ENCODE measurements at regions of chr7 and their contacts with region 1.

Region 1: DNA sequence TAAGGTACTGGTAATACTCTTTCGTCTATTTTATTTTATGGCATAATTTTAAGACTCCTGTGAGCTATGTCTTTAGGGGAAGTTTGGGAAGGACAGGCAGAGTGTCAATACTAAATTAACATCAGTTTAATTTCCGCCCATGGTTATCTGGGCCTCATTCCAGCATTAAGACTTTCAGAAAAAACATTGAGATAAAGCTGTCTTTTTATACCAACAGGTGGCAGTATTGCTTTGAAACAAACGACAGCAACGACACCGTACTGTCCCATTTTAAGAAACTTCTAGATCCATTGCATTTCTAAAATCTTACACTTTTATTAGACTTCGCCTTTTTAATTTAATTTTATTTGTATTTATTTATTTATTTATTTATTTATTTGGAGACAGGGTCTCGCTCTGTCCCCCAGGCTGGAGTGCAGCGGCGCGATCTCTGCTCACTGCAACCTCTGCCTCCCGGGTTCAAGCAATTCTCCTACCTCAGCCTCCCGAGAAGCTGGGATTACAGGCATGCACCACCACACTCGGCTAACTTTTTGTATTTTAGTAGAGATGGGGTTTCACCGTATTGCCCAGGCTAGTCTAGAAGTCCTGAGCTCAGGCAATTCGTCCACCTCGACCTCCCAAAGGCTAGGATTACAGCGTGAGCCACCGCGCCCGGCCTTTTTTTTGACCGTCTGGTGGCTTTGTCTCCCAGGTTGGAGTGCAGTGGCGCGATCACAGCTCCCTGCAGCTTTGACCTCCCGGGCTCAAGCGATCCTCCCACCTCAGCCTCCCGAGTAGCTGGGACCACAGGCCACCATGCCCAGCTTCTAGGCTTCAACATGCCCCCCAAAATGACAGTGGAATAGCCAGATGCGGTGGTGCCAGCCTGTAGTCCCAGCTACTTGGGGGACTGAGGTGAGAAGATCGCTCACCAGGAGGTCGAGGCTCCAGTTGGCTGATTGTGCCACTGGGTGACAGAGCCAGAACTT is 78.7 kb upstream of the C1GALT1 start:
- DNase-seq: no peak
- H3K4me3 Mint-ChIP-seq: no peak overlapping the region
- H3K27ac Mint-ChIP-seq: no peak overlapping the region
- H3K4me1 Mint-ChIP-seq: peaks cover 18% of the 10 kb centered on the region
- H3K27me3 Mint-ChIP-seq: no peaks in the 10 kb centered on the region

Region 2: GRCh38 chr7:7014827-7015610 is 88.6 kb before region 1 on chr7:
- CTCF ChIA-PET with region 1: no interaction called
- POLR2A ChIA-PET with region 1: no interaction called
- intact Hi-C with region 1: no loop called
- DNase-seq: no peak
- H3K4me3 Mint-ChIP-seq: no peak overlapping the region
- H3K27ac Mint-ChIP-seq: no peak overlapping the region
- H3K4me1 Mint-ChIP-seq: no peaks in the 10 kb centered on the region
- H3K27me3 Mint-ChIP-seq: peaks cover 24% of the 10 kb centered on the region

Region 3: DNA sequence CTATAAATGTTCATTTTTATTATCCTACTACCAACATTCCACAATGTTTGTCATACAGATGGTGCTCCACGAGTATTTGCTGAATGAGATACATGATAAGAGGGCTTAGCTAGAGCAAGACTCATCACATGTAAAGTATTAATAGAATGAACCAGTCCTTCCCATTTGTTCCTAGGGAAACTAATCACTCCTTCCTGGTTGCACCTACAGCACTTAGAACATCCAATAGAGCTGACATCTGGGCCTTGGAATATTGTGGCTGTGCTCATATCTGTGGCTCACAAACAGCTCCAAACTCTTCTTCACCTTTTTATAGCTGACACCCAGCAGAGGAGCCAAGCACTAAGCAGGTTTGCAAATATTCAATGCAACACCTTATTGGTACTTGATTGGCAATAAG is 13.2 kb before region 1 on chr7:
- CTCF ChIA-PET with region 1: interaction called, 16 read pairs
- POLR2A ChIA-PET with region 1: no interaction called
- intact Hi-C with region 1: no loop called
- DNase-seq: no peak
- H3K4me3 Mint-ChIP-seq: no peak overlapping the region
- H3K27ac Mint-ChIP-seq: no peak overlapping the region
- H3K4me1 Mint-ChIP-seq: no peaks in the 10 kb centered on the region
- H3K27me3 Mint-ChIP-seq: peaks cover 18% of the 10 kb centered on the region

Region 4: GRCh38 chr7:7190142-7190541 is 86.5 kb after region 1 on chr7:
- CTCF ChIA-PET with region 1: no interaction called
- POLR2A ChIA-PET with region 1: no interaction called
- intact Hi-C with region 1: no loop called
- DNase-seq: no peak
- H3K4me3 Mint-ChIP-seq: no peak overlapping the region
- H3K27ac Mint-ChIP-seq: no peak overlapping the region
- H3K4me1 Mint-ChIP-seq: peaks cover 48% of the 10 kb centered on the region
- H3K27me3 Mint-ChIP-seq: no peaks in the 10 kb centered on the region

Region 5: GRCh38 chr7:7416031-7416858 is 312.6 kb after region 1 on chr7:
- CTCF ChIA-PET with region 1: interaction called, 8 read pairs
- POLR2A ChIA-PET with region 1: no interaction called
- intact Hi-C with region 1: loop called (anchors 5 kb)
- DNase-seq: peak; percentile 38
- H3K4me3 Mint-ChIP-seq: no peak overlapping the region
- H3K27ac Mint-ChIP-seq: peak overlapping the region; percentile 79
- H3K4me1 Mint-ChIP-seq: peaks cover 7% of the 10 kb centered on the region
- H3K27me3 Mint-ChIP-seq: no peaks in the 10 kb centered on the region

Region 6: DNA sequence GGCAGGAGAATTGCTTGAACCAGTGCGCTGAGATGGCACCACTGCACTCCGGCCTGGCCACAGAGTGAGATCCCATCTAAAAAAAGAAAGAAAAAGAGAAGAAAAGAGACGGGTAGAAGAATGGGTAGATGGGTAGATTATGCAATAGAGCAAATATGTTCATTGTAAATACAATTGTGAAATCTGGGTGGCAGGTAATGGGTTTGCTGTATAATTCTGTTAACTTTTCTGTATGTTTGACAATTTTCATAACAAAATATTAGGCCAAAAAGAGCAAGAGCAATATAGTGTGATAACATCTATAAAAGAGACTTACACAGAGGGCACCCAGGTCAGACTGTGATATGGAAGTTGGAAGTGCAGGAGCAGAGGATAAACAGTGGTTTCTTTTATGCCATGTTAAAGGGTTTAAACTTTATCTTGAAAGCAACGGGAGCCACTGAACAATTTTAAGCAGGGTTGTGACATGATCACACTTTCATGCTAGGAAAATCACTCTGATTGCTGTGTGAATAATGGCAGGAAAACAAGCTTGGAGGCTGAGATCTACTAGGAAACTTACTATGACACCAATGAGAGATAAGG is 438.7 kb after region 1 on chr7:
- CTCF ChIA-PET with region 1: interaction called, 45 read pairs
- POLR2A ChIA-PET with region 1: no interaction called
- intact Hi-C with region 1: loop called (anchors 1 kb)
- DNase-seq: no peak
- H3K4me3 Mint-ChIP-seq: no peak overlapping the region
- H3K27ac Mint-ChIP-seq: no peak overlapping the region
- H3K4me1 Mint-ChIP-seq: no peaks in the 10 kb centered on the region
- H3K27me3 Mint-ChIP-seq: no peaks in the 10 kb centered on the region

Region 7: GRCh38 chr7:8295638-8296361 is 1192.2 kb after region 1 on chr7:
- CTCF ChIA-PET with region 1: interaction called, 10 read pairs
- POLR2A ChIA-PET with region 1: no interaction called
- intact Hi-C with region 1: no loop called
- DNase-seq: peak; percentile 20
- H3K4me3 Mint-ChIP-seq: no peak overlapping the region
- H3K27ac Mint-ChIP-seq: no peak overlapping the region
- H3K4me1 Mint-ChIP-seq: peaks cover 2% of the 10 kb centered on the region
- H3K27me3 Mint-ChIP-seq: peaks cover 9% of the 10 kb centered on the region

Measured in activated CD4-positive, alpha-beta memory T cell treated with anti-CD3 and anti-CD28 coated beads for 36 hours (primary cell).